MCF 10A (cell line): ENCODE measurements at regions of chr9 and their contacts with region 1.

Region 1: DNA sequence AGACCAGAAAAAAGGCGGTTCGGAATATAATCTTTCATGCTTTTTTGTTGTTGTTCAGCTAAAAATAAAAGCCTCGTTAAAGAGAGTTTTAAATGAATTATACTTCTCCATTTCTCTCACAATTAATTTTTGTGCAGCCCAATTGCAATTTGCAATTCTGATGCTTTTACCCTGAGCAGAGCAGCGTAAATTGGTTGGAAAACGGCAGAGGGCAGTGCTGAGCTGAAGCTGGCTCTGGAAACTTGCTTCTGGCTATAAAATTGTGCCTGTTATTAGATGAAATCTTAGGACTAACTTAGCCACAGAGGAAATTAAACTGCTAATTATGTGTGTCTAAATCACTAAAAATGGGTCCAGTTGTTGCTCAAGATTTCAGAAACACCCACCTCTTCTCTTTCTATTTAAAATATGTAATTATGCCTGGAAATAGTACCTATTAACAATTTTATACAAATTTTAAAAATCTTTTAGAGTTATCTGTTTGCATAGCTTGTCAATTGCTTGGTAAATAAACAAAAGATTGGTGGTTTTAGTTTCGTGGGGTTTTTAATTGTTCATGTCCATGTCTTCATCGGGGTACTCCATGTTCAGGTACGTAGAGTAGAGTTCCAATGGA is 441.8 kb upstream of the TLE4 start:
- DNase-seq: peak; percentile 60
- H3K4me3 Mint-ChIP-seq: no peak overlapping the region
- H3K27ac Mint-ChIP-seq: no peak overlapping the region
- H3K4me1 Mint-ChIP-seq: peaks cover 6% of the 10 kb centered on the region
- H3K27me3 Mint-ChIP-seq: no peaks in the 10 kb centered on the region
- CTCF ChIP-seq: peak; percentile 63

Region 2: DNA sequence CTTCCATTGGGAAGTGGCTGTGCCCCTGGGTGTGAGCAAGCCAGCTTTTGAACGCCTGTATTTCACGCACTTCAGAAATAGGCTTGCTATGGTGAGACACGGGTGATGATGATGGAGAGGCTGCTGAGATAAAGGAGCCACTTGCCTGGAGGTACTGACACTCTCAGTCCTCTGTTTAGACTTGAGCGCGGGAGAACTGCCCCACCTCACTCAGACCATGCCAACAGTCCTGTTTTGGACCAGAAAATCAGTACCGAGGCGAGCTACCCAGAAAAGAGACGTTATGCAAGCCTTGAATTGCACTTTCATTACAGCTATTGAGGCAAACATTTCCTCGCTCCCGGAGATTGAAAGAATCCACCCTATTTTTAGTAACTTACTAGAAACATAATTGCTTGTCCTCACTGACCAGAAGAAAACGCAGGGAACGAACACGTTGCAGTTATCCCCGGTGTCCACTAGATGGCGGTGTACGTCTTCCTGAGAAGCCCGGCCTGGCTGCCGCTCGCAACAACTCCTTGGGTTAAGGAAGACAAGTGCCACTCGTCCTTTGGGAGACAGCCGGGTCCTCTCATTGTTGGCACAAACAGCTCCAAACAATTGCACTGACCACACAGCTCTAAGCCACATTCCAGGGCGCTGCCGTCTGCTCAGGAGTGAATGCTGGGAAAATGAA is 690.6 kb before region 1 on chr9:
- CTCF ChIA-PET with region 1: interaction called, 5 read pairs
- POLR2A ChIA-PET with region 1: no interaction called
- intact Hi-C with region 1: loop called (anchors 2 kb)
- DNase-seq: peak; percentile 83
- H3K4me3 Mint-ChIP-seq: no peak overlapping the region
- H3K27ac Mint-ChIP-seq: no peak overlapping the region
- H3K4me1 Mint-ChIP-seq: no peaks in the 10 kb centered on the region
- H3K27me3 Mint-ChIP-seq: peaks cover 13% of the 10 kb centered on the region
- CTCF ChIP-seq: peak; percentile 93

Region 3: GRCh38 chr9:78820855-78821822 is 308.8 kb before region 1 on chr9:
- CTCF ChIA-PET with region 1: interaction called, 9 read pairs
- POLR2A ChIA-PET with region 1: no interaction called
- intact Hi-C with region 1: loop called (anchors 1 kb)
- DNase-seq: peak; percentile 54
- H3K4me3 Mint-ChIP-seq: peak overlapping the region; percentile 32
- H3K27ac Mint-ChIP-seq: no peak overlapping the region
- H3K4me1 Mint-ChIP-seq: peaks cover 7% of the 10 kb centered on the region
- H3K27me3 Mint-ChIP-seq: no peaks in the 10 kb centered on the region
- CTCF ChIP-seq: peak; percentile 62

Region 4: DNA sequence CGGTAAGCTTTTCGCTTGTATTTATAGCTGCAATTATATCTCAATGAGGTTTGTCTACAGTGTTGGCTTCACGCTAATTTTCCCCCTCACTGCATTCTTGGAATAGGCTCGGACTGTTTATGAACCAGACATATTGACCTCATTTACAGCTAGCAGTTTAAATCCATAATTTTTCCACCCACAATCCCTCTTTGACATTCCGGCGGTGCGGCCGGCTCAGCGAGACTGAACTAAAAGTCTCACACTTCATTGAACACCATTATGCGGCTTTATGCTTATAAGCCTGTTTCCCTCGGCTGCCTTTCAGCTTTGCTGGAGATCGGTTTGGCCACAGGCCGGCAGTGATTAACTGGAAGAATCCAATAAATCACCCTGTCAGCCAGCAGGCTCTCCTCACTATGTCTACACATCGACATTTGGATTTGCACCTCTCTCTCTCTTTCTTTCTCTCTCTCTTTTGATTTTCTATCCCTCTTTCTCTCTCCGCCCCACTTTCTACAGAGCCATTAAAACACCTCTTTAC is 126.8 kb after region 1 on chr9:
- CTCF ChIA-PET with region 1: interaction called, 48 read pairs
- POLR2A ChIA-PET with region 1: no interaction called
- intact Hi-C with region 1: loop called (anchors 1 kb)
- DNase-seq: no peak
- H3K4me3 Mint-ChIP-seq: no peak overlapping the region
- H3K27ac Mint-ChIP-seq: no peak overlapping the region
- H3K4me1 Mint-ChIP-seq: no peaks in the 10 kb centered on the region
- H3K27me3 Mint-ChIP-seq: no peaks in the 10 kb centered on the region
- CTCF ChIP-seq: no peak

Region 5: GRCh38 chr9:79571309-79572031 is 441.5 kb after region 1 on chr9 and contains the start of gene TLE4:
- CTCF ChIA-PET with region 1: interaction called, 8 read pairs
- POLR2A ChIA-PET with region 1: interaction called, 8 read pairs
- intact Hi-C with region 1: loop called (anchors 1 kb)
- DNase-seq: peak; percentile 99
- H3K4me3 Mint-ChIP-seq: no peak within 1 kb of the TSS
- H3K27ac Mint-ChIP-seq: no peak within 1 kb of the TSS
- H3K4me1 Mint-ChIP-seq: peaks cover 17% of the 10 kb centered on the region
- H3K27me3 Mint-ChIP-seq: no peaks in the 10 kb centered on the region
- CTCF ChIP-seq: no peak
- total RNA-seq, gene TLE4: 8.7 and 12.3 TPM in 2 replicates

Region 6: GRCh38 chr9:80146466-80146865 is 1016.5 kb after region 1 on chr9:
- CTCF ChIA-PET with region 1: no interaction called
- POLR2A ChIA-PET with region 1: no interaction called
- intact Hi-C with region 1: loop called (anchors 10 kb)
- DNase-seq: peak; percentile 18
- H3K4me3 Mint-ChIP-seq: no peak overlapping the region
- H3K27ac Mint-ChIP-seq: no peak overlapping the region
- H3K4me1 Mint-ChIP-seq: no peaks in the 10 kb centered on the region
- H3K27me3 Mint-ChIP-seq: no peaks in the 10 kb centered on the region
- CTCF ChIP-seq: no peak